Dorsolateral prefrontal cortex (tissue), 120 donors: ENCODE measurements at regions of chr17 and their contacts with region 1.

Region 1: DNA sequence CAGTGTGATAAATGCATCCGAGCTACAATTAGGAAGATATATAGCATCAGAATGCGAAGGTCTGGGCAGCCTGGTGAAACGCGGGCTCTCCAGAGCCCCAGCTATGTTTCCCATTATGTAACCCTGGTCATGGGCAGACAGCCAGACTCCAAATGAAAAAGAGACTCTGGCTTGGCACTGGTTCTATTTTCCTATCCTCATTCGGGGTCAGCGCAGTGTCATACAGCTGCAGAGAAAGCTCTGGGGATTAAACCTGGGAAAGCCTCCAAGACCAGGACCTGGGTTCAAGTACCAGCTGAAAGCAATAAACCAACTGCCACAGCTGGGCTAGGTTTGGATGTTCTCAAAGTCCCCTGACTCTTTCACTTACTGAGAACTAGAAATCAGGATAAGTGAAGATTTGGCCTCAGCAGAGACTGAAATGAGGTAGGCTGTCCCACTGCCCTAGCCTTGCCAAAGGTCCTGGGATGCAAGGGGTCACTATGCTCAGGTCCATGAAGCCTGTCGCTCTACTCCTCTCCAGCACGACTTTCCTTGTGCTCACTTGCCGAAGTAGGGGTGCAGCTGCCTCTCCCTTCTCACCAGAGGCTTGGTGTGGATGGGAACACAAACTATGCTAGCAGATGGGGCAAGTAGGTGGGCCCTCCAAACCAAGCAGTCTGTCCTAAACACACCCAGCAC is 123.8 kb downstream of the SMG6 start:
- DNase-seq: peak in 8 of 10 donors; percentile 34 to 69 (median 56)
- H3K4me3 ChIP-seq: peak overlapping the region in 5 of 59 donors; percentile 5 to 20 (median 11)
- H3K27ac ChIP-seq: peak overlapping the region in 53 of 59 donors; percentile 1 to 84 (median 54)
- H3K27me3 ChIP-seq: no peaks in the 10 kb centered on the region
- CTCF ChIP-seq: peak in 1 of 56 donors; percentile 20

Region 2: DNA sequence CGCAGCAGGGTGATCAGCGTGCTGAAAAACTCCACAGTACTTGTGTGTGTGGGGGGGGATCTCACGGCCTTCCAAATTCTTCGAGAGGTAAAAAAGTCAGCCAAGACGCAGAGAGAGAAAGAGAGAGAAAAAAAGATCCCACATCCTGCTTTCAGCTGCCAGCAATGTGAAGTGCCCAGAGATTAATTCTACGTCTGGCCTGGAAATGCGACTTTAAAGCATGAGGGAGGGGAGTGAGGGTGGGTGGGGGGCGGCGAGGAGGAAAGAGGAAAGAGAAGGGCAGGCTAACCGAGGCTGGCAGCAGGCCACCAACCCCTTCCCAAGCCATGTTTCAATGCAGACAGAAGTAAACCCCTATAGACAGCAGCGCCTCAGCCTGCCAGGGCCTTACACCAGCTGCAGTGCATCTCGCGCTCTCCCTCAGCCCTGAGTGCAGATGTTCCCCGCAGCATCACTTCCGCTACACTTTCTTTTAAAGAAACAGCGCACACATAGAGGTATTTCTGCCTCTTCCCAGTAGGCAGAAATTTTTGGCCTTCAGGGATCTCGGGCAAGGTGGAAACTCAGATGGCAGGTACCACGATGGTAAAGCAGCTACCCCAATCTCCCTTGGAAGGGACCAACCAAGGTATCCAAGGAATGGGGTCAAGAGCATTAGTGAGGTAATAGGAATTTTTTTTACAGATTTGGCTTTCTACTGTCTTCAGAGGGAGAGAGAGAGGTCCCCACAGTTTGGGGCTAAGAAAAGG is 36.0 kb after region 1 on chr17:
- intact Hi-C with region 1: loop called in 1 of 2 experiments (anchors 2 kb)
- DNase-seq: peak in 8 of 10 donors; percentile 54 to 71 (median 64)
- H3K4me3 ChIP-seq: peak overlapping the region in 55 of 59 donors; percentile 0 to 56 (median 33)
- H3K27ac ChIP-seq: peak overlapping the region in 58 of 59 donors; percentile 6 to 92 (median 86)
- H3K27me3 ChIP-seq: no peaks in the 10 kb centered on the region
- CTCF ChIP-seq: peak in 3 of 56 donors; percentile 12 to 26 (median 14)